ENCODE measurements at regions of chr9 and their contacts with region 1.

Region 1: DNA sequence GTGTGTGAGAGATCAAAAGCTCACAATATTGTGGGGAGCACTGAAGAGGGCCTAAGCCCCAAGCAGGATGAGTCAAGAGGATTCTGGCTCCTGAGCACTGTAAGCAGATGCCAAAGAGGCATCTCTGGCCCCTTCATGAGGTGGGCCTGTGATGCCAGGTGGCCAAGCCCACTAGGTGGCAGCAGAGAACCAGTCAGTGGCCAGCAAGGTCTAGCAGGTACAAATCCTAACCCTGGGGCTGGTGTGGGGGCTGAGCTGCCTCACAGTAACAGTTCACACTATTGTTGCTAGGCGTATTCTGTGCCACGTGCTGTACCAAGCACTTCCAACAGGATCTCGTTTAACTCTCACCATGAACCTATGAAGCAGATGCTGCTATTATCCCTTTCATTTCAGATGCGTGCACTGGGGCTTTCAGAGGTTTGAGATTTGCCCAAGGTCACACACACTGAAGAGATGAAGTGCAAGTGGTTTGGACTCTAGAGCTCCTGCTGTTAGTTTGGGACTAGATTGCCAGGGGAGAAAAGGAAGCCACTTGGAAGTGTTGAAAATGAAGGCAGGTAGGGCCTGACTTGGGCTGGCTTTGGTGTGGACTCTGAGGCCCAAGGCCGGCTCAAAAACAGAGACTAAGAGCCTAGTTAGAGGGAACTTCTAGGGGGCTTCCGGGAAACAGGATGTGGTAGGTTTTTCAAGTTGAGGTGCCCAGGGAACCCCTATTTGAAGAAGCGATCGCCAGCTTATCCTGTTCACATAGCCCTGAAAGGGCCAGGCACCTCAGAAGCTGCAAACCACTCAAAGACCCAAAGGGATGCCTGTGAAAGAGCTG is 4.4 kb upstream of the MLANA start:
- DNase-seq: peak; percentile 88
- CTCF ChIP-seq: peak; percentile 96

Region 2: GRCh38 chr9:5786370-5787127 is 99.8 kb before region 1 on chr9:
- CTCF ChIA-PET with region 1: no interaction called
- POLR2A ChIA-PET with region 1: no interaction called
- DNase-seq: no peak
- CTCF ChIP-seq: no peak

Region 3: DNA sequence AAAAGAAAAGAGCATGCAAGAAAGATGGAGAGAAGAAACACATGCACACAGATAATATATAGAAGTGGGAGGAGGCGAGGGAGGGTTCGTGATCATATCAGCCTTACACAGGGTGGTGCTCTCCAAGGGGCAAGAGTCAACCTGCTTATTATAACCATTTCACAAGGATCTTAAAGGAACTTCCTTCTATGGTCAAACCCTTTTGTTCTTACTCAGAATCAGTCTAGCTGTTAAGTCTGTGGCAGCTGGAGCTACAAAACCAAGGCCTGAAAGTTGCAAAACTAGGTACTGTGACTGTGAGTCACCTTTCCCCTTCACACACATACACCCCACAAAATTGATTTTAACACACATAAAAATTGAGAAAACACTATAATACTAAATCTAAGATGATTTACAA is 34.9 kb before region 1 on chr9:
- CTCF ChIA-PET with region 1: interaction called, 27 read pairs
- POLR2A ChIA-PET with region 1: no interaction called
- DNase-seq: peak; percentile 78
- CTCF ChIP-seq: no peak

Region 4: GRCh38 chr9:5869315-5870019 is 16.9 kb before region 1 on chr9:
- CTCF ChIA-PET with region 1: interaction called, 61 read pairs
- POLR2A ChIA-PET with region 1: no interaction called
- DNase-seq: peak; percentile 52
- CTCF ChIP-seq: peak; percentile 30

Region 5: DNA sequence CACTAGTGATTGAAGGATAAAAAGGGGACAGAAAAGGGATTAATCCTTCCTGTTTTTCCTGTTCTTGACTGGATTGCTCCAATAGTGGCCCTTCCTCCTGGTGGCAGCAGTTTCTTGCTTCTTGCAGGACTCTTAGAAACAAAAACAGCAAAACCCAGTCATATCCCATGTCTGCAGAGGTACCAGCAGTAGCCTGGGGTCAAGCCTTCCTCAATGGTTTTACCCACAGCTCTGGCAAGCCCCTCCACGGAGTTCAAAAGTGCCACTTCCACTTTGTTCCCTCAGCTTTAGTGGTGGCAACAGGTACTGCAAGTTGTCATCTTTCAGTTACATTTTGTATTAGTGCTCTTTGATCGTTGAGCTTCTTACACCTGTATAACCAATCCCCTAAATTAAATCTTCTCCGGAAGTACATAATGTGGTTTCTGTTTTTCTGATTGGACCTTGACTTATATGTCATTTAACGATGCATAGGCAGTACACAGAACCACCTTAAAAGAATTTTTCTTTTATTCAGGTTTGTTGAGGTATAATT is 137.8 kb after region 1 on chr9:
- CTCF ChIA-PET with region 1: interaction called, 20 read pairs
- POLR2A ChIA-PET with region 1: no interaction called
- DNase-seq: peak; percentile 41
- CTCF ChIP-seq: peak; percentile 17

Region 6: DNA sequence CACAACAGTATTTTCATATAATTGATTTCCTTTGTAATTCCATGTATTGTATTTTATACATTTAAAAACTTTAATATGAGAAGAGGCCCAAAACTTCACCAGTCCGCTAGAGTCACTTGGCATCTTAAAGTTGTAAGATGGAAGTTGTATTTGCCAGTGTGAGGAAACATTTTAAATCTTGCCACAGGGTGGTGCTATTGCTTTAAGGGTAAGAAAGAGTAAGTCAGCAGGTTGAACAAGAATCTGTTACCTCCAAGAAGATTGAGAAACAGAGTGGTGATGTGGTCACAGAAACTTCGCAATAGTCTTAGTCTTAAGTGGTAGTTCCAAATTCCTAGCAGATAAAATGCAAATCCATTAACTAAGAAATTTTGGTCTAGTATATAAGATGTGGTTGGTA is 168.9 kb after region 1 on chr9:
- CTCF ChIA-PET with region 1: interaction called, 82 read pairs
- POLR2A ChIA-PET with region 1: no interaction called
- DNase-seq: peak; percentile 29
- CTCF ChIP-seq: peak; percentile 57

Measured in GM10248 (cell line).